Activated CD8-positive, alpha-beta T cell treated with anti-CD3 and anti-CD28 coated beads for 36 hours (primary cell): ENCODE measurements at regions of chr6 and their contacts with region 1.

Region 1: GRCh38 chr6:11366183-11366933 is 133.9 kb upstream of the NEDD9 start:
- DNase-seq: peak; percentile 77
- ATAC-seq: peak; percentile 74
- H3K4me3 Mint-ChIP-seq: peak overlapping the region; percentile 39
- H3K27ac Mint-ChIP-seq: peak overlapping the region; percentile 86
- H3K4me1 Mint-ChIP-seq: peaks cover 94% of the 10 kb centered on the region
- H3K27me3 Mint-ChIP-seq: no peaks in the 10 kb centered on the region
- CTCF ChIP-seq: peak; percentile 30

Region 2: DNA sequence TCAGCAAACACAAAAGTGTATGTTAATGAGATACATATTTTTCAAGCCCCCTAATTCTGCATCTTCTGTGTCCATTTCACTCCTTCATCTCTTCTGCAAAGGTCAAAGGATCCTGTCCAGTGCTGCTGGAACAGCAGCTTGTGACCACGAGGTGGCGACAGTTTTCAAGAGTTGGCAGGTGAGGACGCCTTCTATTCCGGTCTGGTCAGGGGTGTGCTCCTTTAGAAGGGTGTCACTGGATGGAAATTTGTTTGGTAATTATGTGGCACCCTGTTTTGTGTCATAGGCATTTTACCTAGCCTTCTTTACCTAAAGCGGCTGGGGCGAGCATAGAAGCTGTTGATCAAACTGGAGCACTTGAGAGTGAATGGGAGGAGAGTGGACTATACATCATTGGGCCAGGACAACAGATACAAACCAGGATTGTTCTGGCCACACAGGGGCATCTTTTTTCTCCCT is 221.9 kb before region 1 on chr6:
- CTCF ChIA-PET with region 1: interaction called, 4 read pairs
- POLR2A ChIA-PET with region 1: no interaction called
- intact Hi-C with region 1: loop called (anchors 5 kb)
- DNase-seq: peak; percentile 87
- ATAC-seq: peak; percentile 96
- H3K4me3 Mint-ChIP-seq: no peak overlapping the region
- H3K27ac Mint-ChIP-seq: no peak overlapping the region
- H3K4me1 Mint-ChIP-seq: peaks cover 11% of the 10 kb centered on the region
- H3K27me3 Mint-ChIP-seq: no peaks in the 10 kb centered on the region
- CTCF ChIP-seq: peak; percentile 85

Region 3: DNA sequence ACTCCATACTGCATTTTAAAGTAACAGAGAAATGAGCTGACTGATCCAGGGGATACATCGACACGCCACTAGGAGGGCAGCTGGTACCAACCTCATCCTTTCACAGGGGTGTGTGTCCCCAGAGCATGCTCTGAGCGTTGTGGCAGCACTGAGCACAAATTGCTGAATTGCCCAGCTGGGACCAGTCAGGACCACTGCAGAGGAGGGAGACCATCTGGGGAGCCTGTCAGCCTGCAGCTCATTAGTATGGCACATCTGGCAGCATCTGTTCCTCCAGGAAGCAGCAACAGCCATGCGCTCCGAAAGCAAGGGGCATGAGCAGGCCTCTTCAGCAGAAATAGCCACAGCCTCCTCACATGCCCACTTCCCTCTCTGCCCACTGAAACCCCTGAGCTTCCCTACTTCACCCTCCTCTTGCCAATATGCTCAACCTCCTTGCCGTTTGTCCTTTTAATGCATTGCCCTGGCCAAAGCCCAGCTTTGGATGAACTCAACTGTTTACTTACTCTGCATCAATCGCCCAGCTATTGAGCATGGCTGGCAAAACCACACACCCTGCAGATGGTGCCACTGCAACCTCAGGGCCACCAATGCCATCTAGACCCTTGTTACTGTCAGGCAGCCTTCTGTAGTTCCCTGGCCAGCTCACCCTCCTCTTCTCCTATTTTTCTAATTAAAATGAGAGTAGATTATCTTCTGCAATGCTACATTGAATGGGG is 56.3 kb before region 1 on chr6:
- CTCF ChIA-PET with region 1: no interaction called
- POLR2A ChIA-PET with region 1: no interaction called
- intact Hi-C with region 1: no loop called
- DNase-seq: no peak
- ATAC-seq: no peak
- H3K4me3 Mint-ChIP-seq: no peak overlapping the region
- H3K27ac Mint-ChIP-seq: no peak overlapping the region
- H3K4me1 Mint-ChIP-seq: peaks cover 27% of the 10 kb centered on the region
- H3K27me3 Mint-ChIP-seq: no peaks in the 10 kb centered on the region
- CTCF ChIP-seq: no peak

Region 4: DNA sequence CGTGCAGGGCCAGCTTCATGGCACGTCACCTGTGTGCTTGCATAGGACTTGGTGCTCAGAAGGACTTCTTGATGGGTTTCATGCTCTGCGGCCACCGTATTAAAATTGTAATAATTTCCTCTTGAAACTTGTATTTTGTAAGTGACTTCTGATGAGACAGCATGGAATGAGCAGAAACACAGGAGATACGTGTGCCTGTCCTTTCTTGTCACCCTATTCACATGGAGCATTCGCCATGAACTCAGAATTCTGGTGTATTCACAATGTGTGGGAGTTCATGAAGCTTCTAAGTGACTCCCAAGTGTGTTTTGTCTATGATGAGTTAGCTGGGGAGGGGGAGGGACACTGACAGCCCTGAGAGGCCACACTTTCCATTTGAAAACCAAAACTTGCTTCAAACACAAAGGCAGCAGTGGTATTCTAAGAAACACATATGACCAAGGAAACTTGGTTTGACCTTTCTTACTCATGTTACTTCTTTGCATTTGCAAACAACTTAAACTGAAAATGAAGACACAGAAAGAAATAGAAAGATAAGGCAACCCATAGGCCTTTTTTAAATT is 41.8 kb before region 1 on chr6:
- CTCF ChIA-PET with region 1: interaction called, 3 read pairs
- POLR2A ChIA-PET with region 1: interaction called, 3 read pairs
- intact Hi-C with region 1: loop called (anchors 5 kb)
- DNase-seq: peak; percentile 87
- ATAC-seq: peak; percentile 92
- H3K4me3 Mint-ChIP-seq: peak overlapping the region; percentile 44
- H3K27ac Mint-ChIP-seq: peak overlapping the region; percentile 85
- H3K4me1 Mint-ChIP-seq: peaks cover 68% of the 10 kb centered on the region
- H3K27me3 Mint-ChIP-seq: no peaks in the 10 kb centered on the region
- CTCF ChIP-seq: no peak

Region 5: GRCh38 chr6:11381801-11382513 is 15.6 kb after region 1 on chr6:
- CTCF ChIA-PET with region 1: interaction called, 10 read pairs
- POLR2A ChIA-PET with region 1: interaction called, 13 read pairs
- intact Hi-C with region 1: loop called (anchors 1 kb)
- DNase-seq: peak; percentile 84
- ATAC-seq: peak; percentile 93
- H3K4me3 Mint-ChIP-seq: peak overlapping the region; percentile 82
- H3K27ac Mint-ChIP-seq: peak overlapping the region; percentile 98
- H3K4me1 Mint-ChIP-seq: peaks cover 62% of the 10 kb centered on the region
- H3K27me3 Mint-ChIP-seq: no peaks in the 10 kb centered on the region
- CTCF ChIP-seq: no peak

Region 6: DNA sequence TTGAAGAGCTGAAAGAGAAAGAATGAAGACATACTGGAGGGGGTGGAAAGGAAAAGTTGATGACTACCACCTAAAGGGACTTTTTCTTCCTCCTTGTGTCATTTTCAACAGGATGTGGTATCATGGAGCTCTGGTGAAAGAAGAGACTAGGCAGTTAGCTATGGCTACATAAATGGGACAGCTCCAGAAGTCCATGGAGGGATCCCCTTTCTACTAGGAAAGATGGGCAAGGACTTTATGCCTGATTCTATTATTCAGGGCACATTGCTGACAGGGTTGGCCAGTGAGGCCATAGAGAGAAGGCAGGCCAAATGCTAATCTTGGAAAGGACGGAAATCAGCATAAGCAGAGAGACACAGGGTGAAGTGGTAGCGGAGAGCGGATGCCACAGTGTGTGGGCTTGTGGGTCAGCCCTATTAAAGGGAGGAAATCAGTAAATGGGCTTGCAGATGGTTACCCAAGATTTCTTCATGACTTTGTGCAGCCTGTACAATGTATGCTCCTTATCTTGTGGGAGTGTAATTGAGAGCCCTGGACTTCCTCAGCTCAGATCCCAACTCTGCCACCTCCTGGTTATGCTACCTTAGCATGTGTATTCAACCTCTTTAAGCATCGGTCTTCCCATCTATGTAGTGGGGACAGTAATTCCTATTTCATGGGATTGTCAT is 93.8 kb after region 1 on chr6:
- CTCF ChIA-PET with region 1: no interaction called
- POLR2A ChIA-PET with region 1: interaction called, 6 read pairs
- intact Hi-C with region 1: loop called (anchors 5 kb)
- DNase-seq: peak; percentile 13
- ATAC-seq: peak; percentile 62
- H3K4me3 Mint-ChIP-seq: peak overlapping the region; percentile 51
- H3K27ac Mint-ChIP-seq: peak overlapping the region; percentile 92
- H3K4me1 Mint-ChIP-seq: peaks cover 35% of the 10 kb centered on the region
- H3K27me3 Mint-ChIP-seq: peaks cover 3% of the 10 kb centered on the region
- CTCF ChIP-seq: no peak

Region 7: DNA sequence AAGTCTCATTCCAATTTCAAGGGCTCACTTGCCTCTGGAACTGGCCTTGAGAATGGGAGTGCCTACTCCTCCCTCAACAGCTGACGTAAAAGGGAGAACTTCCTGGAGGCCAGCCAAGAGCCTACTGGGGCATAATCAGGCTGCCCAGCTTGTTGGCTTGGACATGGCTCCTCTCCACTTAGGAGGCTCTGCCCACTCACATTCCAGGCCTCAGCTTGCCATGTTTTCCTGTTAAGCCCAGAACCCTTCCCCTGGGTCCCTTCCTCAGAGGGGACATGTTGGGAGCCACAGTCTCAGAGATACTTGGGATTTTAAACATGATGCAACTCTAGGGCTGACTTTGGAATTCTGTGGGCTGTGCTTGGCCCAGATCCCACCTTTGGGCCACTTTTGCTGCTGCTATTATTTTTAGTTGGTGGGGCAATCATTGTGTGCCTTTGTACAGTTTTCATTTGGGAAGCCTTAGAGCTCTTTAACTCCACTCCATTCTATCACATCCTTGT is 443.7 kb after region 1 on chr6:
- CTCF ChIA-PET with region 1: no interaction called
- POLR2A ChIA-PET with region 1: no interaction called
- intact Hi-C with region 1: no loop called
- DNase-seq: no peak
- ATAC-seq: no peak
- H3K4me3 Mint-ChIP-seq: no peak overlapping the region
- H3K27ac Mint-ChIP-seq: no peak overlapping the region
- H3K4me1 Mint-ChIP-seq: peaks cover 34% of the 10 kb centered on the region
- H3K27me3 Mint-ChIP-seq: no peaks in the 10 kb centered on the region
- CTCF ChIP-seq: no peak